ENCODE measurements at regions of chr4 and their contacts with region 1.

Region 1: DNA sequence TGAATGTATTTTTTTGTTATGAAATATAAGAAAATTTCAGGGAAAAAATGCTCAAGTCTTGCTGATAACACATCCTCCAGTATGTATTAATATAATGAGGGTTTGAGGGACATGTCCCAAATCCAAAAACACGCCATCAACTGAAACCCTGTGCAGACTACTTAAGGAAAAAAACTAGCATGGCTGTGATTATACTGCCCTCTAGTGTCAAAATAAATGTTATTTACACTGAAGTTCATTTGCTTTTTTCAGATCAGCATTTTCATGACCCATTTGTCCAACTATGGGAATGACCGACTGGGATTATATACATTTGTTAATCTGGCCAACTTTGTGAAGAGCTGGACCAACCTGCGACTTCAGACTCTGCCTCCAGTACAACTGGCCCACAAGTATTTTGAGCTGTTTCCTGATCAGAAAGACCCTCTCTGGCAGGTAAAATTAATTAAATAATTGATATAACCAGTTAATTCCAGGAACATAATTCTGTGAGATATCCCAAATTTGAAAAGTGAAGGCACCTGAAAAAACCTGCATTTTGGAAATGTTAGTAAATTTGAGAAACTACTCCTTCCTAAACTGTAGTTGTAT is 128.5 kb downstream of the PRSS12 start:
- DNase-seq: peak; percentile 26
- H3K4me3 ChIP-seq: no peak overlapping the region
- CTCF ChIP-seq: peak; percentile 38

Region 2: DNA sequence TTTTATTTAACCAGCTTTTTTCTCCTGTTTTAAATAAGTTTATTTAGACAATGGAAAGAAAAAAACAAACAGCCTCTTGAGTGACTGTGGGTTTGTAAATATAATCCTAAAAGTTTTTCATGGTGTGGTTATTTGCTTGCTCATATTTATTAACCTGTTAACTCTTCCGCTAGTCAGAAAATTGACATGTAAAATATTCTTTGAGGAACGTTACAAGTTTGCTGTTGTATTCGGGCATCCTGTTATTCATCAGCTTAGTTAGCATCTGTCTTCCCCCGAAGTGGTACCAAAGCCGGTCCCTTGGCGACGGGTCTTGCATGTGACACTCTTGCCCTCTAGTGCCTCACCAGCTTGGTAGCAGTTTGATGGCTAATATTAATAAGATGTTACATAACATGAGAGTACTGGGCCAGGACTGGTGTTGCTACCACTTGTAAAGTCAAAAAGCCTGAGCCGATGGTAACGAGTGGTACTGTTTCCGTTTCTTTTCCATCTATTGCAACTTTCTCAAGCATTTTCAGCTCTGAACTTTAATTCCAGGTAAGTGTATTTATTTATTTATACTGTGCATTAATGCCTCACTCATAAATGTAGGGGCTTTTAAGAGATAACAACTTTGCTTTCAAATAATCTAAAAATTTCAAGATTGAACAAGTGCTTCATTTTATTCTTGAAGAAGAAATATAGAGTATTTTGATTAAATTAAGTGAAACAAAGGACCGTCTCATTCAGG is 190.1 kb before region 1 on chr4 and contains the start of gene NDST3:
- CTCF ChIA-PET with region 1: interaction called, 16 read pairs
- POLR2A ChIA-PET with region 1: no interaction called
- DNase-seq: no peak
- H3K4me3 ChIP-seq: peak within 1 kb of the TSS; percentile 60
- CTCF ChIP-seq: peak; percentile 40

Region 3: GRCh38 chr4:118076958-118077766 is 147.2 kb before region 1 on chr4:
- CTCF ChIA-PET with region 1: interaction called, 99 read pairs
- POLR2A ChIA-PET with region 1: no interaction called
- DNase-seq: no peak
- H3K4me3 ChIP-seq: no peak overlapping the region
- CTCF ChIP-seq: peak; percentile 45

Region 4: GRCh38 chr4:118213101-118213500 is 11.2 kb before region 1 on chr4:
- CTCF ChIA-PET with region 1: interaction called, 58 read pairs
- POLR2A ChIA-PET with region 1: no interaction called
- DNase-seq: no peak
- H3K4me3 ChIP-seq: no peak overlapping the region
- CTCF ChIP-seq: no peak

Region 5: DNA sequence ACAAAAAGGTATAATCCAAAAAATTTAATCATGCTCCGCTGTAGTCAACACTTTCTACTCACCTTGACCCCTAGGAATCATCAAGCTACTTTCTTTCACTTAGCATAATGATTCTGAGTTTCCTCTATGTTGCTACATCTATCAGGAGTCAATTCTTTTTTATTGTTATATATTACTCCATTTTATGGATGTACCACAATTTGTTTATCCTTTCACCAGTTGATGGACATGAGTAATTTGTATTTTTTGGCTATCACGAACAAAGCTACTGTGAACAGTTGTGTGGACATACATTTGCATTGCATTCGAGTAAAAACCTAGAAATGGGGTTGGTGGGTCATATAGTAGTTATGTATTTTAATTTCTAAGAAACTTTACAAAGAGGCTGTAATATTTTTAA is 25.6 kb after region 1 on chr4:
- CTCF ChIA-PET with region 1: interaction called, 17 read pairs
- POLR2A ChIA-PET with region 1: no interaction called
- DNase-seq: no peak
- H3K4me3 ChIP-seq: no peak overlapping the region
- CTCF ChIP-seq: no peak

Region 6: GRCh38 chr4:118557298-118557851 is 333.0 kb after region 1 on chr4:
- CTCF ChIA-PET with region 1: no interaction called
- POLR2A ChIA-PET with region 1: no interaction called
- DNase-seq: peak; percentile 2
- H3K4me3 ChIP-seq: no peak overlapping the region
- CTCF ChIP-seq: no peak

Measured in AG04449 (cell line).